Upper lobe of right lung (tissue), 1 donor: ENCODE measurements at regions of chr13 and their contacts with region 1.

Region 1: GRCh38 chr13:109344552-109345157 is 441.7 kb downstream of the IRS2 start:
- DNase-seq: no peak
- ATAC-seq: no peak
- H3K4me3 ChIP-seq: no peak overlapping the region
- H3K27ac ChIP-seq: no peak overlapping the region
- H3K4me1 ChIP-seq: no peaks in the 10 kb centered on the region
- H3K27me3 ChIP-seq: no peaks in the 10 kb centered on the region
- CTCF ChIP-seq: no peak

Region 2: DNA sequence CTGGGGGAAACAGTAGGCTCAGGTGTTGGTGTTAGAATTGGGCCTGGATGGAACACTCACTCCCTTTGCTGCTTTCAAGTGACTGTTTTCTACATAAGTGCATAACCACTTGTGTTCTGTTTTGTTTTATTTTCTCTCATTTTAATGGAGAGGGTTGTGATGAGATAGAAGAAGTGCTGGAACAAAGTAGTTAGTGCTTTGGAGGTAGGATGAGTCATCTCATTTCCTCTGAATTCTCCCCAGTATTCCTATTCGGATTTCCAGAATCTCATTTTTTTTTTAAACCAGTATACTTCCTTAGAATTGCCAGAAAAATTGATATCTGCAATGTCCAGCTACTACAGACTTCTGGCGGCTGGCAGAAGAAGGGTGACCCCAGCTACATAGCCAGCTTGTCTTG is 139.3 kb before region 1 on chr13:
- intact Hi-C with region 1: loop called (anchors 5 kb)
- DNase-seq: no peak
- ATAC-seq: no peak
- H3K4me3 ChIP-seq: no peak overlapping the region
- H3K27ac ChIP-seq: no peak overlapping the region
- H3K4me1 ChIP-seq: no peaks in the 10 kb centered on the region
- H3K27me3 ChIP-seq: no peaks in the 10 kb centered on the region
- CTCF ChIP-seq: no peak